ENCODE measurements at regions of chr15 and their contacts with region 1.

Region 1: GRCh38 chr15:93030430-93031105 is 58.4 kb downstream of the RGMA start:
- DNase-seq: peak; percentile 69 to 85 (median 83)
- H3K4me3 ChIP-seq: no peak overlapping the region
- H3K27ac ChIP-seq: peak overlapping the region; percentile 35 to 81
- H3K4me1 ChIP-seq: peaks cover 18% of the 10 kb centered on the region
- H3K27me3 ChIP-seq: no peaks in the 10 kb centered on the region
- CTCF ChIP-seq: peak; percentile 86 to 93 (median 92)
- EP300 ChIP-seq: no peak
- POLR2A ChIP-seq: peak; percentile 23

Region 2: GRCh38 chr15:92808978-92809879 is 221.3 kb before region 1 on chr15:
- intact Hi-C with region 1: loop called in 1 of 4 experiments (anchors 10 kb)
- DNase-seq: peak; percentile 98 to 100 (median 99)
- H3K4me3 ChIP-seq: peak overlapping the region; percentile 57
- H3K27ac ChIP-seq: peak overlapping the region; percentile 94 to 99
- H3K4me1 ChIP-seq: peaks cover 8% of the 10 kb centered on the region
- H3K27me3 ChIP-seq: no peaks in the 10 kb centered on the region
- CTCF ChIP-seq: peak; percentile 98 to 100 (median 100)
- EP300 ChIP-seq: peak; percentile 4
- POLR2A ChIP-seq: peak; percentile 67

Region 3: GRCh38 chr15:93485438-93486327 is 455.1 kb after region 1 on chr15:
- intact Hi-C with region 1: loop called in 1 of 4 experiments (anchors 10 kb)
- DNase-seq: peak; percentile 48 to 69 (median 61)
- H3K4me3 ChIP-seq: no peak overlapping the region
- H3K27ac ChIP-seq: peak overlapping the region; percentile 46 to 70
- H3K4me1 ChIP-seq: peaks cover 12% of the 10 kb centered on the region
- H3K27me3 ChIP-seq: no peaks in the 10 kb centered on the region
- CTCF ChIP-seq: peak in 2 of 3 donors; percentile 31 to 60
- EP300 ChIP-seq: no peak
- POLR2A ChIP-seq: no peak

Region 4: DNA sequence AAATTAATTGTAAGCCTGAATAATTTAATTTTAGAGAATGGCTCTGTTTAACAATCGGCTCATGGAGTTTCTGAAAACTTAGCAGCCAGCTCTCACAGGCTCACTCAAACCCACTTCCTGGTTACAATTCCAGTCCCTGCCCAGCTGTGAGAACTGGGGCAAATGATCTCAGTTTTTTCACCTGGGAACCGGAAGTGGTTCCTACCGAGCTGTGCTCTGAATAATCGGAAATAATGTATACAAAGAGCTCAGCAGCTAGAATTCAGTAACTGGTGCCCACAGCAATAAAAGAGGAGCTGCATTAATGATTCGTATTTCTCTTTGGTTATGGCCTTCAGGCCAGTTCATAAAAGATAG is 956.5 kb after region 1 on chr15:
- intact Hi-C with region 1: loop called in 2 of 4 experiments (anchors 10 kb)
- DNase-seq: no peak
- H3K4me3 ChIP-seq: no peak overlapping the region
- H3K27ac ChIP-seq: no peak overlapping the region
- H3K4me1 ChIP-seq: peaks cover 1% of the 10 kb centered on the region
- H3K27me3 ChIP-seq: no peaks in the 10 kb centered on the region
- CTCF ChIP-seq: no peak
- EP300 ChIP-seq: no peak
- POLR2A ChIP-seq: no peak